Esophagus muscularis mucosa (tissue), 4 donors: ENCODE measurements at regions of chr1 and their contacts with region 1.

Region 1: DNA sequence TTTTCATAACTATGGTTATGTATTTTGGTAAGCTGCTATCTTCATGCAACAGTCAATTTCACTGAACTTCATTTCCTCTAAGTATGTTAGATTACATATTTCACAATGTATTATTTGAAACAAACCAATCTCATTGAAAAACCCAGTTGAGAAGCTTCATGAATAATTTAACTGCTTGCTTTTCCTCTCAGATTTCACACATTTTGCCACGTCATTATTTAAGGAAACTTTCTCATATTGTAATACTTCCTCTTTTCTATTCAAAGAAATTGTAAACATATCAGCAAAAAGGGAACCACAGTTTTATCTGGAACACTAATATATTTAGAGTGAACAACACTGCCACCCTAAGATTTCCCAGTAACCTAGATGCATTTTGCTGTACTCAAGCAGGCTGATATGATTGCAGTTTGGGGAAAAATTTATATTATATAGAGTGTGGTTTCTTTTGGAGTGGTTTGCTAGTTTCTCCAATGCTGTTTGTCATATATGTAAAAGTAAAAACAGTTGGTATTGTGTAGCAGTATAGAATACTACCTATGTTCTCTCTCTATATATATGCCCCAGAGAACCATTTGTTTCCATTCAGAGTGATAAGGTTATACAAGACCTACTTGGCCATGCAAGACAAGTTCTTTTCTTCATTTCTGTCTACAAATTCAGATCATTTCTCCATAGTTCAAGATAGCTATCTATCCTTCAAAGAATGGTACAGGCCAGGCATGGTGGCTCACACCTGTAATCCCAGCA is 28.4 kb upstream of the AHCTF1 start:
- DNase-seq: no peak
- H3K4me3 ChIP-seq: no peak overlapping the region
- H3K27ac ChIP-seq: peak overlapping the region in 1 of 4 donors; percentile 16
- H3K4me1 ChIP-seq: no peaks in the 10 kb centered on the region
- H3K27me3 ChIP-seq: no peaks in the 10 kb centered on the region
- CTCF ChIP-seq: peak in 2 of 3 experiments; percentile 13 to 27
- EP300 ChIP-seq: no peak
- POLR2A ChIP-seq: no peak

Region 2: GRCh38 chr1:246428542-246429308 is 531.4 kb before region 1 on chr1:
- intact Hi-C with region 1: no loop called
- DNase-seq: no peak
- H3K4me3 ChIP-seq: no peak overlapping the region
- H3K27ac ChIP-seq: no peak overlapping the region
- H3K4me1 ChIP-seq: no peaks in the 10 kb centered on the region
- H3K27me3 ChIP-seq: no peaks in the 10 kb centered on the region
- CTCF ChIP-seq: no peak
- EP300 ChIP-seq: no peak
- POLR2A ChIP-seq: no peak

Region 3: GRCh38 chr1:246907472-246907871 is 52.6 kb before region 1 on chr1:
- intact Hi-C with region 1: loop called (anchors 10 kb)
- DNase-seq: no peak
- H3K4me3 ChIP-seq: no peak overlapping the region
- H3K27ac ChIP-seq: no peak overlapping the region
- H3K4me1 ChIP-seq: peaks cover 0 to 8% (median 2%) of the 10 kb centered on the region in 4 donors
- H3K27me3 ChIP-seq: no peaks in the 10 kb centered on the region
- CTCF ChIP-seq: peak in 2 of 3 experiments; percentile 21 to 40
- EP300 ChIP-seq: no peak
- POLR2A ChIP-seq: no peak